ENCODE measurements at regions of chr13 and their contacts with region 1.

Region 1: DNA sequence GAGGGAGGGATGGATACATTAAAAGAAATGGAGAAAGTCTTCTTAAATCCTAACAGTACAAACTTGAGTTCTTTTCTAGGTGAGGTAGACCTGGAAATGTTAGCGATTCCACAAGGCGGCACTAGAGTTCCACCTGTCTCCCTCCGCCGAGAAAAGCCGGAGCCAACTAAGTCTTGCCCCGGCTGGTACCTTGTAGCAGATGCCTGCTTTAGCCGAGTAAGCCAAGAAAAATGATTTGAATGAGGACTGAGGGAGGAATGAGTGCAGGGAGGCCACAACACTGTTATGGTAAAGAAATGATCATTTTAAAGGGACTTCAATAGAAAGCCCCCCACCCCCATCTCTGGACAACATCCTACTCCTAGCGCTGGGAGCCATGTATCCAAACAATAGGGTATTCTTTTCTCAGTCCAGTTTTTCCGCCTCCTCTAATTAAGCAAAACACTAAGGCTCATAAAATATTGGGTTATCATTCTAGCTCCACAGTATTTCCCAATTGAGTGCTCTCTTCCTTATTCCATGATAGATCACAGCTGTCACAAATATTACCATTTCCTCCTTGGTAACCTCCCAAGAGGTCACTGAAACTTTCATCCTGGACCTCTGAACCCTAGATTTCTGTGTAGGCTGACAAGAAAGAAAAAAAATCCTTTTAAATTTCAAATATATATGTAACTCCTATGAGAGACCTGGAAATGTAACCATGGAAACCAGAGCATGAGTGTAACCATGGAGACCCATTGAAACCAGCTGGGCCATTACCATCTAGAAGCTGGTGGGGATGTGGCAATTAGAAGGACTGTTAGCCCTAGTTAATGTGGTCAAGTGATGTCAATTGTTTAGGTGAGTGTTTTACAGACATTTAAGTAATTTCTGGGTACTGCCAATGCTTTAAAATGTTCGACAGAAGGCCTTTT is 58.3 kb downstream of the GPALPP1 start:
- DNase-seq: peak; percentile 44 to 78 (median 68)
- ATAC-seq: peak; percentile 92
- H3K4me3 ChIP-seq: no peak overlapping the region
- H3K4me3 Mint-ChIP-seq: peak overlapping the region; percentile 71 to 87 (median 78)
- H3K27ac ChIP-seq: no peak overlapping the region
- H3K27ac Mint-ChIP-seq: peak overlapping the region in 1 of 9 donors; percentile 2
- H3K4me1 ChIP-seq: peaks cover 0 to 7% of the 10 kb centered on the region in 2 donors
- H3K4me1 Mint-ChIP-seq: peaks cover 4 to 17% (median 7%) of the 10 kb centered on the region in 7 donors
- H3K27me3 ChIP-seq: no peaks in the 10 kb centered on the region
- H3K27me3 Mint-ChIP-seq: peaks cover 3 to 34% (median 16%) of the 10 kb centered on the region in 5 donors

Region 2: GRCh38 chr13:44719857-44720671 is 327.6 kb before region 1 on chr13:
- CTCF ChIA-PET with region 1: no interaction called
- POLR2A ChIA-PET with region 1: no interaction called
- intact Hi-C with region 1: no loop called
- DNase-seq: no peak
- ATAC-seq: no peak
- H3K4me3 ChIP-seq: no peak overlapping the region
- H3K4me3 Mint-ChIP-seq: no peak overlapping the region
- H3K27ac ChIP-seq: no peak overlapping the region
- H3K27ac Mint-ChIP-seq: no peak overlapping the region
- H3K4me1 ChIP-seq: no peaks in the 10 kb centered on the region
- H3K4me1 Mint-ChIP-seq: no peaks in the 10 kb centered on the region
- H3K27me3 ChIP-seq: no peaks in the 10 kb centered on the region
- H3K27me3 Mint-ChIP-seq: peaks cover 0 to 4% (median 0%) of the 10 kb centered on the region in 5 donors

Region 3: DNA sequence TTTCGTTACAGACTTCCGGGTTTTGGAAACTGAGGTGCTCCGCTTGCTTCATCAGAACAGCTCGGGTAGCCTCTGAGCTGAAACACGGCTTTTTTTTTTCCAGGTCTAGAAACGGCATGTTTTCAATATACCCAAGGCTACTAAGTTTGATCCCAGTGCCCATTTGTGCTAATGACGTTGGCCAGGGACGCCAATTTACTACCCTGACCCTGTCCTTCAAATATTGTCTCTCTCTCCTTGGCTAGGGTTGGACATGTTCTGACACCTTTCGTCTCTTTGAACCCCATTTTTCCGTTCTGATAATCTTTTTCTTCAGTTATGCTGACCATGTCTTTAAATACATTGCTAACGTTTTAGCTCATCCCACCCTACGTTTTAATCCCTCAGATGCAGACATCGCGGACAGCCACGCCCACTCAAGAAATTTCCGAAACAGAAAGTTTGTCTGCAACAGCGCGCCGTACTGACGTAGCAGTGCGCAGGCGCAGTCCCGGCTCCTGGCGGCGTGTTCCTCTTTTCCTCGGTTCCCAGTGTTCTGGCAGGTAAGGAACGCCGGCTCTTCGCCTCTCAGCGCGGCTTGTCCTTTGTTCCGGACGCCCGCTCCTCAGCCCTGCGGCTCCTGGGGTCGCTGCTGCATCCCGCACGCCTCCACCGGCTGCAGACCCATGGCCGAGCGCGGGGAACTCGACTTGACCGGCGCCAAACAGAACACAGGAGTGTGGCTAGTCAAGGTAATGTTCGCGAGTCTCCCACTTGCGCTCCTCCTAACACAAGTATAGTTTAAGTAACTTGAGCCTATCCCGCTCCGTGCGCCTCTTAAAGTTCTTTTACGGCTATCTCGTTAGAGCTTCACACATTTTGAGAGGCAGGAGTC is 72.6 kb after region 1 on chr13 and contains the start of gene GTF2F2:
- CTCF ChIA-PET with region 1: interaction called, 4 read pairs
- POLR2A ChIA-PET with region 1: no interaction called
- intact Hi-C with region 1: loop called (anchors 1 kb)
- DNase-seq: peak; percentile 81 to 89 (median 86)
- ATAC-seq: peak; percentile 80
- H3K4me3 ChIP-seq: peak within 1 kb of the TSS; percentile 80
- H3K4me3 Mint-ChIP-seq: no peak within 1 kb of the TSS
- H3K27ac ChIP-seq: peak within 1 kb of the TSS; percentile 91
- H3K27ac Mint-ChIP-seq: no peak within 1 kb of the TSS
- H3K4me1 ChIP-seq: peaks cover 16 to 21% of the 10 kb centered on the region in 2 donors
- H3K4me1 Mint-ChIP-seq: peaks cover 6 to 17% (median 13%) of the 10 kb centered on the region in 7 donors
- H3K27me3 ChIP-seq: no peaks in the 10 kb centered on the region
- H3K27me3 Mint-ChIP-seq: no peaks in the 10 kb centered on the region
- total RNA-seq, gene GTF2F2: 13.7 to 20.4 (median 15.2) TPM

Region 4: DNA sequence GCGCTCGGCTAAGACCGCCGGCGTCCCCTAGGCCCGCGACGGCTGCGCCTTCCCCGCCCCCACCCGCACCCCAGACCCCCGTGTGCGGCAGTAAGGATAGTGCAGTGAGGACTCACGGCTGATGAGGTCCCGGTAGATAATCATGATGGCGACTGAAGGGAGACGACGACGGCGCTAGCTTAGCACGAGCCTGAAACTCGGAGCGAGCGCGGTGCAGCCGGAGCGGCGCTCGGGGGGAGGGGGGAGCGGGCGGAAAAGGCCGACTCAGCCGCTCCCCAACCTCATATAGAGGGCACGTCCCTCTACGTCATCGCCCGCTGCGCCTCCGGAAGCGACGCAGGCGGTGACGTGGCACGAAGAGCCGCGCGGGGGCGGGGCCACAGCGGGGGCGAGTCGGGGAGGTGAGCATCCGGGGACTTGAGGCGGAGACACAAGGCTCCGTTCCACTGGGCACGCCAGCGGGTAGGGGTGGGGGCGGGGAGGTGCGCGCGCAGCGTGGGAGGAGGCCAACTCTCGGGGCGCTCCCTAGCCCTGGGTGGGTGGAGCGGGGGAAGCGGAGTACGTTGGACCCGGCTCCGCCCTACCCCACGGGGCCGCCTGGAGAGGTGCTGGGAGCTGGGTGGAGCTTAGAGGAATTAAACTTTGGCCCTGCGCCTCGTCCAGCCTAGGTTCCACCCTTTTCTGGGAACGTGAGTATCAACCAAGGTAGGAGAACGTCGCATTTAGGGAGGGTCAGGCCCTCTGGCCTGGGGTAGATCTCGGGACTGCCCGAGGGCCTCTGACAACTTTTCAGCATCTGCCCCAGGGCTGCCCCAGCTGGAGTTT is 293.5 kb after region 1 on chr13 and contains the start of gene TPT1:
- CTCF ChIA-PET with region 1: interaction called, 4 read pairs
- POLR2A ChIA-PET with region 1: no interaction called
- intact Hi-C with region 1: loop called (anchors 1 kb)
- DNase-seq: peak; percentile 99 to 100 (median 99)
- ATAC-seq: peak; percentile 91
- H3K4me3 ChIP-seq: peak within 1 kb of the TSS; percentile 94
- H3K4me3 Mint-ChIP-seq: peak within 1 kb of the TSS; percentile 95 to 100 (median 98)
- H3K27ac ChIP-seq: peak within 1 kb of the TSS; percentile 99
- H3K27ac Mint-ChIP-seq: peak within 1 kb of the TSS; percentile 92 to 100 (median 99)
- H3K4me1 ChIP-seq: peaks cover 35 to 43% of the 10 kb centered on the region in 2 donors
- H3K4me1 Mint-ChIP-seq: peaks cover 35 to 70% (median 57%) of the 10 kb centered on the region in 7 donors
- H3K27me3 ChIP-seq: no peaks in the 10 kb centered on the region
- H3K27me3 Mint-ChIP-seq: no peaks in the 10 kb centered on the region
- total RNA-seq, gene TPT1: 4,230 to 13,134 (median 7,796) TPM

Region 5: GRCh38 chr13:45393941-45394570 is 346.4 kb after region 1 on chr13:
- CTCF ChIA-PET with region 1: interaction called, 8 read pairs
- POLR2A ChIA-PET with region 1: no interaction called
- intact Hi-C with region 1: loop called (anchors 1 kb)
- DNase-seq: peak in 1 of 9 donors; percentile 33
- ATAC-seq: peak; percentile 52
- H3K4me3 ChIP-seq: no peak overlapping the region
- H3K4me3 Mint-ChIP-seq: no peak overlapping the region
- H3K27ac ChIP-seq: no peak overlapping the region
- H3K27ac Mint-ChIP-seq: peak overlapping the region in 8 of 9 donors; percentile 16 to 95 (median 72)
- H3K4me1 ChIP-seq: peaks cover 10 to 20% of the 10 kb centered on the region in 2 donors
- H3K4me1 Mint-ChIP-seq: peaks cover 30 to 49% (median 48%) of the 10 kb centered on the region in 7 donors
- H3K27me3 ChIP-seq: no peaks in the 10 kb centered on the region
- H3K27me3 Mint-ChIP-seq: no peaks in the 10 kb centered on the region

Region 6: GRCh38 chr13:45511310-45512097 is 463.9 kb after region 1 on chr13:
- CTCF ChIA-PET with region 1: interaction called, 3 read pairs
- POLR2A ChIA-PET with region 1: no interaction called
- intact Hi-C with region 1: loop called in 1 of 2 experiments (anchors 1 kb)
- DNase-seq: peak in 7 of 9 donors; percentile 41 to 72 (median 63)
- ATAC-seq: peak; percentile 95
- H3K4me3 ChIP-seq: no peak overlapping the region
- H3K4me3 Mint-ChIP-seq: no peak overlapping the region
- H3K27ac ChIP-seq: no peak overlapping the region
- H3K27ac Mint-ChIP-seq: peak overlapping the region in 7 of 9 donors; percentile 22 to 60 (median 46)
- H3K4me1 ChIP-seq: no peaks in the 10 kb centered on the region
- H3K4me1 Mint-ChIP-seq: peaks cover 3 to 7% (median 5%) of the 10 kb centered on the region in 7 donors
- H3K27me3 ChIP-seq: no peaks in the 10 kb centered on the region
- H3K27me3 Mint-ChIP-seq: no peaks in the 10 kb centered on the region

Region 7: DNA sequence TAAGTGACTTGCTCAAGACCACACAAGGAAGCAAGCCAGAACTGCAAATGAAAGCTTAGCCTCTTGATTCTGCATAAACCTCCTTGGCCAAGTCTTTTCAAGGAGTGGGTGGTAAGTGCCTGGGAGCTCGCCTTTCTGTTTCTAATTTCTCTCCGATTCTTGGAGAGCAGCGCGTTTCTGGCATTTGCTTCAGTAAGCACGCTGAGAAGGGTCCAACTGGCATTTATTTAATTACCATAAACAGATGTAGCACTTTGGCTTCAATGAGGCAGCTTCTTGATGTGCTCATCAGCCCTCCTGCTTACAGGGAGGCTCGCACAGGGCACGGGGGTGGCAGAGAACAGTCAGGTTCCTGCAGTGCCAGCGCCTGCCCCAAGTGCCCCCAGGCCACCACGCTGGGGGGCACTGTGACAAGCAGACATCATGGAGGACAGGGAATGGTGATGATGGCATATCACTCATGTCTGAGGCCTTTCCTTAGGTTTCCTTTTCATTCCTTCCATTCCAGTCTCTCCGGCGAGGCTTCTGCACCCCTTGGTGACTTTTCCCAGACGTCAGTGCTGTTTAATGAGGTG is 790.6 kb after region 1 on chr13:
- CTCF ChIA-PET with region 1: no interaction called
- POLR2A ChIA-PET with region 1: no interaction called
- intact Hi-C with region 1: no loop called
- DNase-seq: no peak
- ATAC-seq: no peak
- H3K4me3 ChIP-seq: no peak overlapping the region
- H3K4me3 Mint-ChIP-seq: no peak overlapping the region
- H3K27ac ChIP-seq: no peak overlapping the region
- H3K27ac Mint-ChIP-seq: peak overlapping the region in 1 of 9 donors; percentile 2
- H3K4me1 ChIP-seq: no peaks in the 10 kb centered on the region
- H3K4me1 Mint-ChIP-seq: peaks cover 0 to 6% (median 0%) of the 10 kb centered on the region in 7 donors
- H3K27me3 ChIP-seq: no peaks in the 10 kb centered on the region
- H3K27me3 Mint-ChIP-seq: peaks cover 0 to 3% (median 0%) of the 10 kb centered on the region in 5 donors